ENCODE measurements at regions of chr12 and their contacts with region 1.

Region 1: DNA sequence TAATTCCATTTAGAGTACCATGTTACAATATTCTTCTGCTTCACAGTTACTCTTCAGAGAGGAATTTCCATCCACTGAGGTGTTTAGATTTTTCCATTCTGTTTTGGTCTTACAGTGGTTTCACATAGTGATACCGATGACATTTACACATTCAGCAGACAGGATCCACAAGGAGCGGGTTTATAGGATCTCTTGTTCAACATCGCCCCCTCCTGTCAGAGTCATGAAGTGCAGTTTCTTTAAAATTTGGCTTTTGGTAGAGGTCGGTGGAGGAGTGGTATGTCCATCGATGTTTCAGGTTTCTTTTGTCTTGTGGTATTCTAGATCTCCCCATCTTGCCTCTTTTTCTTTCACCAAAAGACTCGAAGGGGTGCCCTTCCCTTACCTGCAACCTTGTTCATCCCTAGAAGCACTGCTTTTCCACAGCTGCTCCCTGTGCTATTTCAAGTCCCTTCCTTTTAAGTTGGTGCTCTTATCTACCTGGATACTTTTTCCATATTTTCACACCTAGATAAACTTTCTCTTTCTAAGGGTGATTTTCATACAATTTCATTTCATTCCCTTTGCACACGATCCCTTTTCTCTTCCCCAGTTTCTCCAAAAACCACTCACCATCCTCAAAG is 181.3 kb downstream of the ITPR2 start:
- DNase-seq: peak in 2 of 5 donors; percentile 26 to 39
- ATAC-seq: peak in 3 of 4 donors; percentile 65 to 80 (median 76)
- H3K4me3 ChIP-seq: no peak overlapping the region
- H3K27ac ChIP-seq: no peak overlapping the region
- H3K4me1 ChIP-seq: peaks cover 0 to 8% (median 0%) of the 10 kb centered on the region in 12 donors
- H3K27me3 ChIP-seq: no peaks in the 10 kb centered on the region
- CTCF ChIP-seq: peak; percentile 65 to 83 (median 78)
- POLR2A ChIP-seq: no peak

Region 2: DNA sequence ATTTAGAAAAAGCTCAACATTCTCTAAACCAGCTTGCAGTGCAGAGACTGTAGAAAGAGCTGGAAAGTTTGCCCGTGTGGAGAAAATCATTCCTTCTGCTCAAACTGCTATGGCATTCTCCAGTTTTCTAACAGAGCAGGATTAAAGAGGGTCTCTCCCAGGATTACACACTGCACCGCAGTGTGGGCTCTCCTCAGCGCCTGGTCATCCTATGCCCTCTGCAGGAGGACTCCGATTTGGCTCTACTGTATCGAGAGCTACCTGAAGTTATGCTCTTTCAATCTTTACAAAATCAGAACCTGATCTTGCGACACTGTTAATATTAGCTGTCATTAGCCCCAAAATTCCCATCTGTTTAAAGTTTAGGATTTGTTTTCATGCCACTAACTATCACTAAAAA is 559.9 kb before region 1 on chr12:
- intact Hi-C with region 1: loop called in 9 of 10 experiments (anchors 1 to 10 kb)
- DNase-seq: no peak
- ATAC-seq: peak in 2 of 4 donors; percentile 58
- H3K4me3 ChIP-seq: no peak overlapping the region
- H3K27ac ChIP-seq: no peak overlapping the region
- H3K4me1 ChIP-seq: no peaks in the 10 kb centered on the region
- H3K27me3 ChIP-seq: no peaks in the 10 kb centered on the region
- CTCF ChIP-seq: peak in 6 of 12 donors; percentile 14 to 40 (median 25)
- POLR2A ChIP-seq: no peak

Region 3: DNA sequence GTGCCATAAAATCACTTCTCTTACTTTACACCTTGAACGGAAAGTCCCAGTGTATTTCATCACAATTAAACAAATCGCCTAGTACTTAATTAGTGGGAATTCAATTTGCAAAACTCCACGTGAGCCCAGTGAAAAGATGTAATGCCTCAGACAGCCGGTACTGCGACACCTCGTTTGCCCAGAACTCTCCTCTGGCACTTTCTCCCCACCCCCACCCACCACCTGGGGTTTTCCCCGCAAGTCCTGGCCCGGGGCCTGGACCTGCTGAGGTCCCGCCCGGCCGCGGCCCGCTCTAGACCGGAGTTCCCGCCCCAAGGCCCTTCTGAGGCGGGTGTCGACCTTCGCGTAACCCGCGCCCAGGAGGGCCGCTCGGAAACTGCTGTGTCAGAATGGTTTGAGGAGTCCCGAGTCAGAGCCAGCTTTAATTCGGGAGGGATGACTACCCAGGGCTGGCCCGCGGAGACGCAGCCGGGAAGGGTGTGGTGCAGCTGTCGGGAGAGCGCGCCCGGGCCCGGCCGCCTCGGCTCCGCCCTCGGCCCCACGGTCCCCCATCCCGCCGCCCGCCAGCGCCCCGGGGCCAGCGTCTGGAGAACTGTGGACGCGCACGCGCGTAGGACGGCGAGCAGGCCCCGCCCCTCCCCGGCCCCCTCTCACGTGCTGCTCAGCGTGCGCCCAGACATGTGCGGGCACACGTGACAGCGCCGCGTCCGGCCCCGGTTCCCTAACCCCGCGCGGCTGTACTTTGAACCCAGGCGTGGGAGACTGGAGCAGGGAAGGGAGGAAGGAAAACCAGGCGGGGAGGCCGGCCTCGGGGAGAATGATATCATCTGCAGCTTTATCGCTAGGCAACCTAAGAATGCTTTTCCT is 537.6 kb before region 1 on chr12:
- intact Hi-C with region 1: loop called in 2 of 10 experiments (anchors 5 to 10 kb)
- DNase-seq: peak; percentile 95 to 96 (median 96)
- ATAC-seq: peak; percentile 83 to 97 (median 92)
- H3K4me3 ChIP-seq: peak overlapping the region; percentile 3 to 65 (median 54)
- H3K27ac ChIP-seq: peak overlapping the region; percentile 88 to 98 (median 93)
- H3K4me1 ChIP-seq: peaks cover 0 to 56% (median 36%) of the 10 kb centered on the region in 12 donors
- H3K27me3 ChIP-seq: no peaks in the 10 kb centered on the region
- CTCF ChIP-seq: peak in 4 of 12 donors; percentile 22 to 43 (median 34)
- POLR2A ChIP-seq: peak in 1 of 2 donors; percentile 89

Region 4: DNA sequence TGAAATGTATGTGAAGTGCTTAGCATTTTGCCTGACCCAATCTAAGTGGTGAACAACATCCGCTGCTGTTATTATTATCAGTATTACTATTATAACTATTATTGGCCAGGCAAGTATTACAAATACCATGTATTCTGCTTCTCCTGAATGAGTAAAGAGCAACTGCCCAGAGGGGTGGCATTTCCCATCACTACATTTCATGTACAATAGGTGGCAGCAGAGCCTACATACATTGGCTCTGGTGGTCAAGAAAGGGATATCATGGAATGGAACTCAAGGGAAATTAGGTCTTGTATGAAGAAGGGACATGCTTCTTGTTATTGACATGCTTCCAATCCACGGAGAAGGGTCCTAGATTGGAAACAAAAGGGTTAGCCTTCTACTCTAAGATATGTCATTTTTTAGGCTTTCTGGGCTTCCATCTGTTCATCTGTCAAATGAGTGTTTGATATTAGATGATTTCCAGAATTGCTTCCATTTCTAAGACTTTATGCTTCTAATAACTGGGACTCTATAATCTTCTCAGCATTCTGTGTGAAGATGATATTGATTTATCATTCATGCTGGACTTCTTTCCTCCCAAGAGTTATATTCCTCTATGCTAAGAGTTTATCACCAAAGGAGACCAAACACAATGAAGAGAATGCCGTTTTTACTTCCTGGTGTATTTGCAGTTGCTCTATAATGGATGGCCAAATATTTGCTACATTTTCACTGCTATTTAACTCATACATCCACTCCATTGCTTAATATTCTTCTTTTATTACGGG is 217.2 kb before region 1 on chr12:
- intact Hi-C with region 1: loop called in 4 of 10 experiments (anchors 5 to 10 kb)
- DNase-seq: no peak
- ATAC-seq: peak; percentile 58 to 76 (median 64)
- H3K4me3 ChIP-seq: no peak overlapping the region
- H3K27ac ChIP-seq: no peak overlapping the region
- H3K4me1 ChIP-seq: no peaks in the 10 kb centered on the region
- H3K27me3 ChIP-seq: no peaks in the 10 kb centered on the region
- CTCF ChIP-seq: peak; percentile 49 to 71 (median 62)
- POLR2A ChIP-seq: no peak

Measured in heart left ventricle (tissue), 16 donors.